ENCODE measurements at regions of chr19 and their contacts with region 1.

Region 1: DNA sequence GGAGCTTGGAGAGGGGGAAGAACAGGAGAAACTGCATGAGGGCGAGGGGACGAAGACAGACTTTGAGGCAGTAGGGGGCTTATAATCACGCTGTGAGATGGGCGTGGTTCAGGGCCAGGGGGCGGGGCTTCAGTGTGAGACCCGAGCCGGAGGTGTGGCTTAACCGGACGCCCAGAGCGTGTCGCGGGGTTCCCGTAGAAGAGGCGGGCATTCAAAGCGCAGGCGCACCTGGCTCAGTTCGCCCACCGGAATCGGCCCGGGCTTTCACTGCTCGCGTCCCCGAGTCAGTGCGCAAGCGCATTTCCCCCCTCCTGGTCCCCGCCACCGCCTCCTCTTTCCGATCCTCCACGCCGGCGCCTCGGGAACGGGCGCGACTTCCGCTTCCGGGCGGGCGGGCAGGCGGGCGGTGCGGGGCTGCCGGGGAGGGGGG is 225 bp upstream of the ZNF865 start:
- DNase-seq: peak; percentile 94
- H3K4me3 ChIP-seq: peak overlapping the region; percentile 73
- H3K27ac ChIP-seq: peak overlapping the region; percentile 88
- H3K27me3 ChIP-seq: no peaks in the 10 kb centered on the region
- CTCF ChIP-seq: no peak

Region 2: GRCh38 chr19:55516878-55517620 is 88.2 kb before region 1 on chr19:
- CTCF ChIA-PET with region 1: interaction called, 29 read pairs
- POLR2A ChIA-PET with region 1: interaction called, 4 read pairs
- DNase-seq: peak; percentile 86
- H3K4me3 ChIP-seq: peak overlapping the region; percentile 44
- H3K27ac ChIP-seq: no peak overlapping the region
- H3K27me3 ChIP-seq: no peaks in the 10 kb centered on the region
- CTCF ChIP-seq: peak; percentile 90

Region 3: GRCh38 chr19:55617426-55617825 is 12.2 kb after region 1 on chr19:
- CTCF ChIA-PET with region 1: interaction called, 11 read pairs
- POLR2A ChIA-PET with region 1: interaction called, 3 read pairs
- DNase-seq: no peak
- H3K4me3 ChIP-seq: no peak overlapping the region
- H3K27ac ChIP-seq: no peak overlapping the region
- H3K27me3 ChIP-seq: no peaks in the 10 kb centered on the region
- CTCF ChIP-seq: no peak

Region 4: GRCh38 chr19:55624109-55625003 is 19.1 kb after region 1 on chr19 and contains the start of gene ZNF784:
- CTCF ChIA-PET with region 1: interaction called, 17 read pairs
- POLR2A ChIA-PET with region 1: interaction called, 3 read pairs
- DNase-seq: peak; percentile 81
- H3K4me3 ChIP-seq: peak within 1 kb of the TSS; percentile 77
- H3K27ac ChIP-seq: peak within 1 kb of the TSS; percentile 90
- H3K27me3 ChIP-seq: no peaks in the 10 kb centered on the region
- CTCF ChIP-seq: no peak
- polyA plus RNA-seq, gene ZNF784: 1.9 and 2.8 TPM in 2 replicates

Region 5: DNA sequence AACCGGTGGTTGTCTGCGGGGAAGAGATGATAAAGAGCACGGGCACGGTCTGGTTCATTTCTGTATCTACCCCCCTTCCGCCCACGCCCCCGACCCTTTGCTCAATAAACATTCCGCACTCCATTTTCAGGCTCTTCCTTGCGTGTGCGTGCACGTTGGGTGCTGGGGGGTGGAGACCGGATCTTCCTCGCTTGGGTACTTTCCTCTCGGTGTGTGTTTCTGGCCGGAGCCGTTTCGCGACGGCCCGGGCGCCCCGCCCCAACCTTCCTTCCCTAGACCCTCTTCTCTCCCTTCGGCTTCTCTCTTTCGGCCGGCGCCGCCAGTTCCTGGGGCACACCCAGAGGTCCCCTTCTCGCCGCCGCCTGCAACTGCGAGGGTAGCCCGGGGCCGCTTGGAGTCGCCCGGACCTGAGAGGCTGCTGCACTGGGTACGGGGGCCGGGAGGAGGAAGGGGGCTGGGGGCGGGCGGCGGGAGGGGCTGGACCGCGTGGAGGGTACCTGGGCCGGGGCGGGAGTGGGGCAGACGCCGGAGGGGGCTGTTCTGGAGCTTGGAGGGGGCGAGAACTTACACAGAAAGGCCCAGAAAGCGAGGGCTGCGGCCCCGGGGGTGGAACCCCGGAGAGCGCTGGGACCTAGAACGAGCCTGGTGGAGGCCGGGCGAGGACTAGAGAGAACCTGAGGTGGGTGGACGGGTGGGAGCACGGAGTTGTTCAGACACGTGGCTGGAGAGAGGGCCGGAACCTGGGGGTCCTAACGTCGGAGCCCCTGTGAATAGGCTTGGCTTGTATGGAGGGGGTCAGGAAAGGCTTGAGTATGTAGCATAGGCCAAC is 38.3 kb after region 1 on chr19 and contains the start of gene ZNF581:
- CTCF ChIA-PET with region 1: no interaction called
- POLR2A ChIA-PET with region 1: no interaction called
- DNase-seq: peak; percentile 56
- H3K4me3 ChIP-seq: peak within 1 kb of the TSS; percentile 84
- H3K27ac ChIP-seq: peak within 1 kb of the TSS; percentile 73
- H3K27me3 ChIP-seq: no peaks in the 10 kb centered on the region
- CTCF ChIP-seq: no peak
- polyA plus RNA-seq, gene ZNF581: 19.1 and 22.9 TPM in 2 replicates

Region 6: DNA sequence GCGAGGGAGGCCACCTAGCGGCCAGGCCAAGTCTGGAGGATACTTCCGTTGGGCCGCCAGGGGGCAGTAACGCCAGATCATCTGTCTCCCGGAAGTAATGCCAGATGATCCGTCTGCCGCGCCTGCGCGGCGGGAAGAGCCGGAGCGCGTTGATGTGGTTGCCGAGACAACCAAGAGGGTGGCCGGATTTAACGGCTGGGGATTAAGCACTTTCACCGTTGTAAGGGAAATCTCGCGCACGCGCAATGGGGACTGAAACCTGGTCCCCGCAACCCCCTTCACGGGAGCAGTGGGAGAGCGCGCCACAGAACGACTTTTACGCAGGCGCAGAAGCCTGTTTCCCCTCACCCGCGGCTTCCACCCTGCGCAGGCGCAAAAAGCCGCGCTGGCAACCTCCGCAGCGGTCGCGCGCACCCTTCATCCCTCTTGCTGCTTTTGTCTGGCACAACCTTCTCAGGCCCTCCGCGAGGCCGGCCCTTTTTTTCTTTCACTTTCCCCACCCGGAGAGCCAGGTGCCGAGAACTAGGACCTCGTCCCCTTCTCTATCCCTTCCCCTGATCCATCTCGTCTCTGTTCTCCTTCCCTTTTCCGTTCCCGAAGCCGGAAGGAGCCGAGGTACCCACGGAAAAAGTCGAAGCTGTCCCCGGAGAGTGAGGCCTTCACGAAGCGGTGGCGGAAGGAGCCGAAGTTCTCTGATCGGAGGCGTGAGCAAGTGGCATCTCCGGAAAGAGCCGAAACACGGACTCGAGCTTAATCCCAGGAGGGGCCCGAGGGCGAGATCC is 48.7 kb after region 1 on chr19:
- CTCF ChIA-PET with region 1: interaction called, 12 read pairs
- POLR2A ChIA-PET with region 1: no interaction called
- DNase-seq: peak; percentile 99
- H3K4me3 ChIP-seq: peak overlapping the region; percentile 92
- H3K27ac ChIP-seq: peak overlapping the region; percentile 97
- H3K27me3 ChIP-seq: no peaks in the 10 kb centered on the region
- CTCF ChIP-seq: peak; percentile 100